ENCODE measurements at regions of chr6 and their contacts with region 1.

Region 1: GRCh38 chr6:2021713-2022125 is 223.7 kb downstream of the GMDS start:
- DNase-seq: peak; percentile 89
- H3K4me3 Mint-ChIP-seq: no peak overlapping the region
- H3K27ac Mint-ChIP-seq: no peak overlapping the region
- H3K4me1 Mint-ChIP-seq: peaks cover 21% of the 10 kb centered on the region
- H3K27me3 Mint-ChIP-seq: no peaks in the 10 kb centered on the region
- CTCF ChIP-seq: no peak

Region 2: DNA sequence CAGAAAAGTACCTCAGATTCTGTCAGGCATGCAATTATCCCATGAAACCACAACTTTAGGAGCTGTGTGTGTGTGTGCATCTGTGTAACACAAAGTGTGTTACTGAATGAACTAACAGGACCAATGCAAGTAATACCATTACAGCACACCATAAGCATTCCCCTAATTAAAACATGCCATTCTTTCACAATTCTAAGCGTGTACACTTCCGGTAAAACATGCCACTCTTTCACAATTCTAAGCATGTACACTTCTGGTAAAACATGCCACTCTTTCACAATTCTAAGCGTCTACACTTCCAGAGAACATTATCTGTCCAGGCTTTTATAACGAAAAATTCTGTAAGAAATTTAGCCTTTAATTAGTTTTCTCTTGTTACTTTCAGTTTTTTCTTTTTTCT is 14.6 kb before region 1 on chr6:
- CTCF ChIA-PET with region 1: interaction called, 3 read pairs
- POLR2A ChIA-PET with region 1: interaction called, 13 read pairs
- intact Hi-C with region 1: no loop called
- DNase-seq: no peak
- H3K4me3 Mint-ChIP-seq: no peak overlapping the region
- H3K27ac Mint-ChIP-seq: no peak overlapping the region
- H3K4me1 Mint-ChIP-seq: peaks cover 5% of the 10 kb centered on the region
- H3K27me3 Mint-ChIP-seq: no peaks in the 10 kb centered on the region
- CTCF ChIP-seq: no peak

Region 3: DNA sequence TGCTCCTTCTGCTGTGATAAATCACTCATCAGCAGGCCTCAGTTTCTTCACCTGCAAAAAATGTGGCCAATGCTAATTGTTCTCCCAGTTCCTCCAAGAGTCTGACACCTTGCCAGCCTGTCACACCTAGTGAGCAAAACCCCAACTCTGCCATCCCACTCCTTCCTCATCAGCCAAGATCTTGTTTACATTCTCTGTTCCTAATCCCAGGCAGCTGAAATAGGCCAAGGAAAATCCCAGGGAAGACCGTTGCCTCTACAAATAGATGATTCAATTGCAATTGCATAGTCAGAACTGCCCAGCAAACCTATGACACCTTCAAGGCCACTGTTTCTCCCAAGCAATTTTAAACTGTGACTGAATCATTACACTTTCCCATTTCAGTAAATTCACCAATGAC is 145.0 kb after region 1 on chr6:
- CTCF ChIA-PET with region 1: no interaction called
- POLR2A ChIA-PET with region 1: no interaction called
- intact Hi-C with region 1: no loop called
- DNase-seq: peak; percentile 66
- H3K4me3 Mint-ChIP-seq: no peak overlapping the region
- H3K27ac Mint-ChIP-seq: no peak overlapping the region
- H3K4me1 Mint-ChIP-seq: peaks cover 18% of the 10 kb centered on the region
- H3K27me3 Mint-ChIP-seq: no peaks in the 10 kb centered on the region
- CTCF ChIP-seq: no peak

Measured in MCF 10A (cell line).